Activated naive CD8-positive, alpha-beta T cell treated with anti-CD3 and anti-CD28 coated beads, Interleukin-2, amount 10 ng/mL, durations not matched to agents 7 days and 5 days (primary cell): ENCODE measurements at regions of chr12 and their contacts with region 1.

Region 1: GRCh38 chr12:47397664-47398281 is 308.1 kb downstream of the RPAP3 start:
- DNase-seq: peak; percentile 68
- ATAC-seq: peak; percentile 85
- H3K4me3 Mint-ChIP-seq: peak overlapping the region; percentile 69
- H3K27ac Mint-ChIP-seq: peak overlapping the region; percentile 91
- H3K4me1 Mint-ChIP-seq: peaks cover 49% of the 10 kb centered on the region
- H3K27me3 Mint-ChIP-seq: no peaks in the 10 kb centered on the region

Region 2: DNA sequence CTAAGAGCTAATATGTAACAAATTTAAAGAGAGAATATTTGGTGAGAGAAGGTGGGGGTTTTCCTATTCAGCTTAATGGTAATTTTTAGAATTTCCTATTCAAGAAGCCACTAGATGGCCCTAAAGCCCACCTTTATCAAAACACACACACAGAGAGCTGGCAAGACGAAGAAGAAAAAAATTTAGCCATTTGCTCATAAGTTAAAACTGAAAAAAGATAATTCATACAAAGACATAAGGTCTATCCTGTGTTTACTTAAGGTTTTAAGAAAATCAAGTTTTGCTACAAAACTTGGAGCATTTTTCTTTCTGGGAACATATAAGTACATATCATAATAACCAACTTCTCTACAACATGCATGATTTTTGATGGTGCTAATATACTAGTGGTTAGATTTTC is 365.1 kb before region 1 on chr12:
- POLR2A ChIA-PET with region 1: interaction called, 10 read pairs
- DNase-seq: no peak
- ATAC-seq: peak; percentile 60
- H3K4me3 Mint-ChIP-seq: no peak overlapping the region
- H3K27ac Mint-ChIP-seq: no peak overlapping the region
- H3K4me1 Mint-ChIP-seq: peaks cover 7% of the 10 kb centered on the region
- H3K27me3 Mint-ChIP-seq: no peaks in the 10 kb centered on the region

Region 3: GRCh38 chr12:47079468-47079980 is 318.2 kb before region 1 on chr12 and contains the starts of genes AMIGO2 and PCED1B:
- POLR2A ChIA-PET with region 1: interaction called, 24 read pairs
- DNase-seq: peak; percentile 78
- ATAC-seq: peak; percentile 65
- H3K4me3 Mint-ChIP-seq: peak within 1 kb of the TSS; percentile 96
- H3K27ac Mint-ChIP-seq: peak within 1 kb of the TSS; percentile 93
- H3K4me1 Mint-ChIP-seq: peaks cover 51% of the 10 kb centered on the region
- H3K27me3 Mint-ChIP-seq: no peaks in the 10 kb centered on the region
- total RNA-seq, gene AMIGO2: 20.2 to 20.5 TPM
- total RNA-seq, gene PCED1B: 102 to 104 TPM

Region 4: DNA sequence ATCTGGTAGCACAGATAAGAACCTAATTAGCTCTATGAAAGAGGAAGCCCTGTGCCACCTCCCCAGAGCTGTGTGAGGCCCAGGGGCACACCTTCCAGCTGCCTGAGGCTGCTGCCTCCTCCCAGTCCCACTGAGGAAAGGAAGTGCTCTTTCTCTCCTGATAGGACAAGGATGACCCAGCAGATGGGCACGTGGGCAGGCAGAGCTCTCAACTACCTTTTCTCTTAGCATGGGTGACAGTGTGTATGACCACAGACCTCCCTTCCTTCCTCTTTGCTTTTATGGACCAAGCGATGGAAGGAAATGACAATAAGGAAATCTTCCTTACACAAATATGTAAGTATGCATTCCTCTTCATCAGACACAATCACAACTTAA is 190.4 kb before region 1 on chr12:
- POLR2A ChIA-PET with region 1: interaction called, 32 read pairs
- DNase-seq: peak; percentile 62
- ATAC-seq: peak; percentile 67
- H3K4me3 Mint-ChIP-seq: peak overlapping the region; percentile 87
- H3K27ac Mint-ChIP-seq: peak overlapping the region; percentile 88
- H3K4me1 Mint-ChIP-seq: peaks cover 62% of the 10 kb centered on the region
- H3K27me3 Mint-ChIP-seq: no peaks in the 10 kb centered on the region

Region 5: DNA sequence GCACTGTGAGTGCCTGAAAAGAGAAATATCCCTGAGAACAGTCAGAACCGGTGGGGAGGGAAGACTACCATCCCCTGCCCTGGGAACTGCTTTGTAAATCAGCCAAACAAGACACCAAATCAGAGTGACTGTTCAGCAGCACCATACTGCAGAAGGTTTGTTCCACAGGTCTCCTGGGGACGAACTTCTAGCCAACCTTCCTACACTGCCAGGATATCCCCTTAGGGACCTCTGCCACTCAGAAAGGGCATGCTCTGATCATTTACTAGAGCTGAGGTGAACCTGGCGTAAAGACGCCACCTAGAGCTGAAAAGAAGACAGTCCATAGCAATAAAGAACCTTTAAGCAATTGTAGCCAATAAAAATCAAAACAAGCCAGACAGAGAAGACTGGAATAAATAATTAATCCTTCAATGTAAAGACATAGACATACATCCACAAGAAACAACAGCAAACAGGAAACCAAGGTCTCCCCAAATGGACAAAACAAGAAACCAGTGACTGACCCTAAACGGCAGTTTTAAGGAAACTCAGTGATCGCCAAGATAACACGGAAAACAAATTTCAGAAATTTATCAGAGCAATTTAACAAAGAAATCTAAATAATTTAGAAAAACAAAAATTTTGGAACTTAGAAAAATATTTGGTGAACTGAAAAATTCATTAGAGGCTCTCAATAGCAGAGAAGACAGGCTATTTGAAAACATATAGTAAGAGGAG is 89.9 kb before region 1 on chr12:
- POLR2A ChIA-PET with region 1: interaction called, 28 read pairs
- DNase-seq: peak; percentile 47
- ATAC-seq: peak; percentile 93
- H3K4me3 Mint-ChIP-seq: peak overlapping the region; percentile 86
- H3K27ac Mint-ChIP-seq: peak overlapping the region; percentile 92
- H3K4me1 Mint-ChIP-seq: peaks cover 42% of the 10 kb centered on the region
- H3K27me3 Mint-ChIP-seq: no peaks in the 10 kb centered on the region

Region 6: DNA sequence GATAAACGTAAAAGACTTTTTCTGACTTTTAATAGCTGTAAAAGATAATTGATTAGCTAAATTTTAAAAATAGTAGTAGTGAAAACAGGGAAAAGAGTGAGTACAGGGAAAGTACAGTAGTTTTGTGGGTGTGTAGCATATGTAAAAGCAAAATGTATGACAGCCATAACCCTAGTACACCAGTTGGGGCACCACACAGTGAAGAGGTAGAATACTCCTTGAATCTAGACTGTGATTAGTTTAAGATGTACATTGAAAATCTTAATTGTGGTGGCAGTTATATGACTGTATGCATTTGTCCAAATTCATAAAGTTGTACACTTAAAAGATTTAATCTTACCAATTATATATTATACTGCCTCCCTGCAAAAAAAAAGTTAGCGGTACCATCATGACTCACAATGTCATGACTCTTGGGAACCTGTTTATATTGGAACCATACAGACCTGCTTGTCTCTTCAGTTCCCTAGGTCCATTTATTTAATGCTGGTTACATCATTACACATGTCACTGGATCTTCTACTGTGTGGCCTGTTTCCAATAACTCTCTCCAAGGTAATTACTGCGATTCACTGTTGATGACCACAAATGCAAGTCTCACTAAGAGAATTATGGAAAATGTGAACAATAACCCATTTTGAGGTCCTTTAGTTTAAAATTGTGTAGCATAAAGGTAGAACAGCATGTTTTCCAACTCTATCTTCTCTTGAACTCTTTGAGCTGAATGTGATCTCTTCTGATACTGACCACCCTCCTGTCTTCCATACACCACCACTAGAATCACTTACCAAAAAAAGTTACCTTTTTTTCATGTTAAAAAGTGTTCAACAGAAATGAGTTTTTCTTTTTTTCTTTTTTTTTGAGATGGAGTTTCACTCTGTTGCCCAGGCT is 53.9 kb before region 1 on chr12:
- POLR2A ChIA-PET with region 1: no interaction called
- DNase-seq: no peak
- ATAC-seq: no peak
- H3K4me3 Mint-ChIP-seq: no peak overlapping the region
- H3K27ac Mint-ChIP-seq: no peak overlapping the region
- H3K4me1 Mint-ChIP-seq: peaks cover 10% of the 10 kb centered on the region
- H3K27me3 Mint-ChIP-seq: no peaks in the 10 kb centered on the region

Region 7: DNA sequence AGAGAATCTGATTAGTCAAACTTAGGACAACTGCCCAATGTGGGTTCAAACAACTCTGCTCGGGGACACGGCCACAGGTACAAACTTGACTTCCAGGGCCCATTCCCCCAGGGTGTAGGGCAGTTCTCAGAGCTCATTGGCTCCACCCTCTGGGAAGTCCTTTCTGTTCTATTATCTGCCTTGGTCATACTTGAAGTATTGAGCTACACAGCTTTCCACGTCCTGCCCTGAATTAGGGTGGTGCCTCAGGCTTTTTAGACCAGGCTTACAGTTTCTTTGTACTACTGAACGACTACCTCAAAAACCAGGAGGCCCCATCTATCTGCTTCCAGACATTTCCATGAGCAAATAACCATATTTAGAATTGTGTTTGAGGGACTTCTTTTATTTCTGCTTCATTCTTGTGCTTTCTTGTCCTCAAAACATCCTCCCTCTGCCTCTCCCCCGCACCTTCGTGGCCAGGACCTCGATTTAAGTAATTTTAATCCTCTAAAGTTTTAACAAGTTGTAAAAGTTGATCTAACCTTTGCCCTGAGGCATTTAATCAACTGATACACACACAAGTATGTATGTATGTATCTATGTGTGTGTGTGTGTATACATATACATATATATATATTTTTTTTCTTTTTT is 36.3 kb before region 1 on chr12:
- POLR2A ChIA-PET with region 1: interaction called, 30 read pairs
- DNase-seq: peak; percentile 65
- ATAC-seq: peak; percentile 83
- H3K4me3 Mint-ChIP-seq: peak overlapping the region; percentile 83
- H3K27ac Mint-ChIP-seq: peak overlapping the region; percentile 95
- H3K4me1 Mint-ChIP-seq: peaks cover 44% of the 10 kb centered on the region
- H3K27me3 Mint-ChIP-seq: no peaks in the 10 kb centered on the region